A549 (cell line): ENCODE measurements at regions of chr5 and their contacts with region 1.

Region 1: GRCh38 chr5:140710899-140711552 is 10.8 kb downstream of the ZMAT2 start:
- DNase-seq: peak; percentile 94 to 98
- ATAC-seq: peak; percentile 94 to 96
- H3K4me3 ChIP-seq: peak overlapping the region; percentile 46
- H3K27ac ChIP-seq: peak overlapping the region; percentile 81 to 93
- H3K4me1 ChIP-seq: peaks cover 9% of the 10 kb centered on the region; the same call in 2 of the 3 replicates
- CTCF ChIP-seq: no peak
- EP300 ChIP-seq: peak in 1 of 2 experiments; percentile 20; a peak in 1 of 5 replicates
- POLR2A ChIP-seq: peak; percentile 46
- RAD21 ChIP-seq: no peak

Region 2: GRCh38 chr5:140700177-140701144 is 10.6 kb before region 1 on chr5 and contains the start of gene ZMAT2:
- CTCF ChIA-PET with region 1: interaction called, 9 read pairs
- POLR2A ChIA-PET with region 1: interaction called, 72 read pairs
- DNase-seq: peak; percentile 96 to 99
- ATAC-seq: peak; percentile 94 to 98
- H3K4me3 ChIP-seq: peak within 1 kb of the TSS; percentile 93
- H3K27ac ChIP-seq: peak within 1 kb of the TSS; percentile 82 to 88
- H3K4me1 ChIP-seq: peaks cover 11% of the 10 kb centered on the region; the same call in 2 of the 3 replicates
- CTCF ChIP-seq: no peak
- EP300 ChIP-seq: no peak
- POLR2A ChIP-seq: peak; percentile 59
- RAD21 ChIP-seq: no peak
- polyA plus RNA-seq, gene ZMAT2: 62.1 and 90.9 TPM in 2 replicates

Region 3: GRCh38 chr5:140725799-140726471 is 14.9 kb after region 1 on chr5:
- CTCF ChIA-PET with region 1: interaction called, 3 read pairs
- POLR2A ChIA-PET with region 1: interaction called, 16 read pairs
- DNase-seq: peak; percentile 90 to 98
- ATAC-seq: peak; percentile 97 to 98
- H3K4me3 ChIP-seq: peak overlapping the region; percentile 53
- H3K27ac ChIP-seq: peak overlapping the region; percentile 24 to 69; a peak in 4 of 6 replicates
- H3K4me1 ChIP-seq: 0 out of 3 replicates have a peak, but pooled peaks cover 3% of the 10 kb centered on the region
- CTCF ChIP-seq: no peak
- EP300 ChIP-seq: no peak
- POLR2A ChIP-seq: no peak
- RAD21 ChIP-seq: no peak; a peak in 1 of 5 replicates